ENCODE measurements at regions of chr3 and their contacts with region 1.

Region 1: DNA sequence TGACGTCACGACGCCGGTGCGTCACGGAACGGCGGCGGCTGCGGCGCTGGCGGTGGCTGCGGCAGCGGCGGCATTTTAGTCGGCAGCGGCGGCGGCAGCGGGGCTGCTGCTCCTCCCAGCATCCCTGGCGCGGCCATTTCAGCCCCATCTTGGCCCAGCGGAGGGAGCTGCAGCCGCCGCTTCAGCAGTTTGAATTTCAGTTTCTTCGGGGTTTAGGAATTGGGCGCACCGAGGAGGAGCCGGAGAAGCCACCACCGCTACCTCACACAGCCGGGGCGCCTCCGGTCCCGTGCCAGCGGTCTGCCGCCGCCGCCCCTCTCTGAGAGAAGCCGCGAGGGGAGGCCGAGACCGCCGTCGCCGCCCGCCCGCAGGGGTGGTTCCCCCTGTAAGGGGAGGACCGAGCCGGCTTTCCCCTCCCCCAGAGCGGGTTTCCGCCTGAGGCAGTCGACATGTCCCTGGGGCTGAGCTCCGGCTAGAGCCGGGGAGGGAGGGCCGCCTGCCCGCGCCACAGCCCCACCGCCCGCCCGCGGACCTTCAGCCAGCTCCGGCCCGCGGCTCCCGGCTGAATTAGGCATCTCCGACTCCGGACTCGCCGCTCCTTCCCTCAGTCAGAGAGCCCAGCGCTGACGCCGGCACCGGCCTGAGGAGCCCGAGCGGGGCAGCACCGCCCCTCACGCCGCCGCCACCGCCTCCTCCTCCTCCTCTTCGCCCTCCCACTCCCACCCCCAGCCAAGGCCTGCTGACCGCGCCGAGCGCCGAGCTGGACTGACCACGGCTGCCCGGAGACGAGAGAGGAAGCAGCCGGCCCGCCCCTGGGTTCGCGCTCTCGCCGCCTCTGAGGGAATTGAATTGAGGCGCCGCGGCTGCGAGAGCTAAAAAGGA is at the start of gene TSC22D2:
- DNase-seq: peak; percentile 98
- ATAC-seq: peak; percentile 91
- total RNA-seq, gene TSC22D2: 19.8 TPM

Region 2: GRCh38 chr3:149917124-149917667 is 491.3 kb before region 1 on chr3:
- intact Hi-C with region 1: no loop called
- DNase-seq: no peak
- ATAC-seq: no peak

Region 3: GRCh38 chr3:150227839-150228238 is 180.6 kb before region 1 on chr3:
- intact Hi-C with region 1: loop called (anchors 5 kb)
- DNase-seq: no peak
- ATAC-seq: peak; percentile 8

Region 4: GRCh38 chr3:150286390-150287147 is 121.9 kb before region 1 on chr3:
- intact Hi-C with region 1: loop called (anchors 2 kb)
- DNase-seq: no peak
- ATAC-seq: no peak

Region 5: GRCh38 chr3:150371741-150372254 is 36.7 kb before region 1 on chr3:
- intact Hi-C with region 1: loop called (anchors 2 kb)
- DNase-seq: no peak
- ATAC-seq: peak; percentile 92

Region 6: DNA sequence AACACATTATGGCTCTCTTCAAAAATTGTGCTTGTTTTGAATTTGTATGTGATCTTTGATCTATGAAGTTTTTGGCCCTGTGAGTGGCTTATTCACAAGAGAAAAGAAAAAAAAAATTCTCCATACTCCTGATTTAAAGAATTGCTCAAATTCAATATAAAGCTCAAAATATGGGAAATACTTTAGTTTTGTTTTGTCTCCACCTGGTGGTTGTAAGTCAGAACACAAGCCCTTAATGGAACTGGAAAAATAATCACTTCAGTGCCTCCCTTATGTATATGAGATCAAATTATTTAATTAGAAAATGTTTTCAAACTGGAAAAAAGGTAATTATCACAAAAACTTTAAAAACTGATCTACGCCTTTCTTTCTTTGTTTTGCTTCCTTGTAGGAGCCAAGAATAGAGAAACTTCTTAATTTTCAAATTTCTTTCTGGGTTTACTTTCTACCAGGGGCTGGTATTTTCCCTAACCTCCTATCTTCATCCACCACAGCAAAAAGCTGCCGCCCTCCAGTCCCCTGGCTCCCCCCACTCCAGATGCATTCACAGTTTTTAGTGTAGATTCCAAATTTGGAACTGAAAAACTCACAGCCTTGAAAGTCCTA is 87.2 kb after region 1 on chr3:
- intact Hi-C with region 1: loop called (anchors 2 kb)
- DNase-seq: no peak
- ATAC-seq: no peak